ENCODE measurements at regions of chr16 and their contacts with region 1.

Region 1: DNA sequence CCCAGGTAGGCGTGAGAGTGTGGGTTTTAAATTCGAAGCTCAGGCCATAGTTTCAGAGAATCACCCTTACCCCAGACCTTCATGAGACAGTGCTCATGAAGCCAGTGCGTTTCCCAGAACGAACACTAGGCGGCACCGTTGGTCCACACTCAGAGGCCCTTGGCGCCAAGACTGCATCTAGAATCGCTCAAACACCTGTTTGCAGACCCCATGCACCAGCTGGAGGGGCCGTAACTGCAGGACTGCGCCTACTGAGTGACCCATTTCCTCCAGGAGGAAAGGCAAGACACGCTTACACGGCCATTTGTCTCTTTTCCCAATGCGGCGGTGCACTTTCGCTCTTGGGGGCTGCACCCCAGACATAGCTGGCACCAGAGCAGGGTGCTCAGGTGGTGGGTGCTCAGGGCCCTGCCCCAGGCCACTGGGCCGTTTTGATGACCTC is 34.0 kb downstream of the ADGRG5 start:
- DNase-seq: peak; percentile 38
- H3K4me3 ChIP-seq: no peak overlapping the region
- H3K27ac ChIP-seq: no peak overlapping the region
- H3K4me1 ChIP-seq: no peaks in the 10 kb centered on the region
- H3K27me3 ChIP-seq: no peaks in the 10 kb centered on the region
- CTCF ChIP-seq: peak; percentile 99 to 100

Region 2: GRCh38 chr16:57507136-57508034 is 69.1 kb before region 1 on chr16:
- CTCF ChIA-PET with region 1: no interaction called
- dilution Hi-C with region 1: loop called (anchors 5 kb)
- in situ Hi-C with region 1: no loop called
- intact Hi-C with region 1: no loop called
- DNase-seq: no peak
- H3K4me3 ChIP-seq: no peak overlapping the region
- H3K27ac ChIP-seq: no peak overlapping the region
- H3K4me1 ChIP-seq: no peaks in the 10 kb centered on the region
- H3K27me3 ChIP-seq: no peaks in the 10 kb centered on the region
- CTCF ChIP-seq: no peak

Region 3: DNA sequence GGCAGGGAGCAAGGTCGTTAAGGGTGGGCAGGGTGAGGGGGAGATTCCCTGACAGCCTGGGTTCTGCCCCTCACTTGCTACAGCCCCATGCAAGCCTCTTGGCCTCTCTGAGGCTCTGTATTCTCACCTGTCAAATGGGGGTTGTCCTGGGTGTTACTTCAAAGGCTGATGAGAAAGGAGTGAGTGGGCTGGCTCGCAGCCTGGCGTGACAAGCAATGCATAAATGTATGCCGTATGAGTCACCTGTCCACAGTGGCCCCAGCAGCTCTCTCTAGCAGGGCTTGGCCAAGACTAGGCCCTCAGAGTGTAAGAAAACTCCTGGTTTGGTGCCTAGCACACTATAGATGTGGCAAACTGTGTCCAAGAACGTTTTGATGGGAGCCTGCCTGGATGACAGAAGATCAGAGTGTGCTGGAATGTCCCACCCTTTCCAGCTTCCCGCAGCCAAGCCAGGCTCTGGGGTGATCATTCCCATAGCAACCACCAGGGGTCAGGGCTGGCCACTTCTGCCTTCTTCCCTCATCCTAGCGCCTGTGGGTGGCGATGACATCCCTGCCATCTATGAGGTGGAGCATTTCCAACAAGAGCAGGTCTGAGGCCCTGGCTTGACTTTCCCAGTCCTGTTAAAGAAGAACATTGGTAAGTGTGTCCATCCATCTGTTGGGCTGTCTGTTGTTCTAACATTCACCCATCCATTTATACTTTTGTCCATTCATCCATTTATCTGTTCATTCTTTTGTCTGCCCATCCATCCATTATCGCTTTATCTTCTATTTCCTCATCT is 14.8 kb after region 1 on chr16:
- CTCF ChIA-PET with region 1: no interaction called
- dilution Hi-C with region 1: no loop called
- in situ Hi-C with region 1: no loop called
- intact Hi-C with region 1: no loop called
- DNase-seq: peak; percentile 90
- H3K4me3 ChIP-seq: peak overlapping the region in 1 of 3 experiments; percentile 0
- H3K27ac ChIP-seq: peak overlapping the region; percentile 40
- H3K4me1 ChIP-seq: peaks cover 19% of the 10 kb centered on the region
- H3K27me3 ChIP-seq: no peaks in the 10 kb centered on the region
- CTCF ChIP-seq: peak; percentile 89 to 97

Region 4: DNA sequence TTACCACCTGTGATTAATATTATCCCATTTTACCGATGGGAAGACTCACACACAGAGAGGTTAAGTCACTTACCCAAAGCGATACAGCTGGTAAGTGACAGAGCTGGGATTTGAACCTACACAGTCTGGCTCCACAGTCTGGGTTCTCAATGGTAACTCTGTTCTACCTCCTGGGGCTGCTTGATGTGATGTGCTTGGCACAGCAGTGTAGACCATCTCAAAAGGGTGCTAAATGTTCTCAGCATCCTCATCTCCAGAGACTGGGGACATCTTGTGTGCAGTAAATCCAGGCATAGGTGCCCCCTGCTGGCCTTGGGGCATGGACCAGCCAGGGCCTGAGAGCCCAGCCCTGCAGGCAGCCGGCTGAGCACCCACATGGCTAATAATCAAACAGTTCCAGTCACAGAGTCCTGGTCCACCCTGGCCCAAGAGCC is 143.7 kb after region 1 on chr16:
- CTCF ChIA-PET with region 1: interaction called, 5 read pairs
- dilution Hi-C with region 1: no loop called
- in situ Hi-C with region 1: loop called in 1 of 2 experiments (anchors 25 kb)
- intact Hi-C with region 1: loop called (anchors 1 kb)
- DNase-seq: peak; percentile 39
- H3K4me3 ChIP-seq: no peak overlapping the region
- H3K27ac ChIP-seq: no peak overlapping the region
- H3K4me1 ChIP-seq: no peaks in the 10 kb centered on the region
- H3K27me3 ChIP-seq: peaks cover 3% of the 10 kb centered on the region
- CTCF ChIP-seq: peak; percentile 60 to 68

Region 5: DNA sequence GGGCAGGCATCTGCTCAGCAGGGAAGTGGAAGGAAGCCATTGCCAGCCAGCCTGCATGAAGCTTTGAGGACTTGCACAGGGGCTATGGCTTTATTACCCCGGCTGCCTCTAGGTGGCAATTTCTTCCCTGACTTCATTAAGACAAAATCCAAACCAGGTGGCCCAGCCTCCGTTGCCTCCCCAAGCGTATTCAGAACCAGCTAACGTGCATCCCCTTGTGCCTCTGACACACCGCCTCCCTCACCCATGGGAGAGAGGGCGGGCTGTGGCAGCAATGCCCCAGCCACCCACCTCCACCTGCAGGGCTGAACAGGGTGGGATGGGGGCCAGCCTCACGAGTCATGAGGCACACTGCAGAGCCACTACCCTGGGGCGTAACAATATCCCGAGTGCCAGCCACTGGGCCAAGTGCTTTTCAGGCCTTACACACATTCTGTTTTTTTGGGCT is 219.0 kb after region 1 on chr16:
- CTCF ChIA-PET with region 1: no interaction called
- dilution Hi-C with region 1: no loop called
- in situ Hi-C with region 1: no loop called
- intact Hi-C with region 1: loop called (anchors 10 kb)
- DNase-seq: peak; percentile 71
- H3K4me3 ChIP-seq: no peak overlapping the region
- H3K27ac ChIP-seq: no peak overlapping the region
- H3K4me1 ChIP-seq: peaks cover 36% of the 10 kb centered on the region
- H3K27me3 ChIP-seq: no peaks in the 10 kb centered on the region
- CTCF ChIP-seq: peak; percentile 37 to 70

Region 6: DNA sequence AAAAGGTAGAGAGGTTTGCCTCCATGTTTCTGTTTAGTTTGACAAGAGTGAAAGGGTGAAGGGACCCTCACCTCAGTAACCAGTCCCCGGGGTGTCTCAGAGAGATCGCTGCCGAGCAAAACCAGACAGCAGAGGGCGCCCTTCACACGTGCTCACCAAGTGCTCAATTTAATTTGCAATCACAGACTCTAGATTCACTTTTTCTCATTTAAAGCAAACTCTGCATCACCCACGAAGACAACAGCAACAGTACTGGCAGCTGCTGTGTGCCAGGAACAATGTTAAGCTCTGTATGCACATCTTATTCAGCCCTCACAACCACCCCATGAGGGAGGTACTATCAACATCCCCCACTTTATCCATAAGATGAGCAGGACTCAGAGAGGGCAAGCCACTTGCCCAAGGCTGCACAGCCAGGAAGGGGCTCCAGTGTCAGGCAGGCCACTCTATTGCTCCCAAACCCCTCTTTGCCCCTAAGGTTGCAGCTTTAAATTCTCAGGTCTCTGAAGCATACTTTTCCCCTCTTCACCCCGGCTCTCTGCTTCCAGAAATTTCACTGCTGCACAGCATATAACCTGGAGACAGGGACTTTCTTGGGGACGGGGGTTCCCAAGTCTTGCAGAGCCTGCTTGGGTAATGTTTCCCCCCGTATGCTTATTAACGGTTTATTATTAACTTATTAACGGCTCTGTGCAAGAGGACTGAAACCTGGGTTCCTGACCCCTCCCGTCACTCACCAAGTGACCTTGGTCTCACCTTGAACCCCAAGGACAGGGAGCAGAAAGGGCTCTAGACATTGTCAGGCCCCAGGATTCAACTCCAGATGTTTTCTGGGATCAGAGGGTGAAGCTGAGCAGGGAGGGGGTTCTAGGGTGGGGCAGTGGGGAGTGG is 323.6 kb after region 1 on chr16:
- CTCF ChIA-PET with region 1: no interaction called
- dilution Hi-C with region 1: no loop called
- in situ Hi-C with region 1: loop called in 1 of 2 experiments (anchors 25 kb)
- intact Hi-C with region 1: loop called (anchors 2 kb)
- DNase-seq: peak; percentile 42
- H3K4me3 ChIP-seq: no peak overlapping the region
- H3K27ac ChIP-seq: no peak overlapping the region
- H3K4me1 ChIP-seq: peaks cover 3% of the 10 kb centered on the region
- H3K27me3 ChIP-seq: no peaks in the 10 kb centered on the region
- CTCF ChIP-seq: peak; percentile 90 to 95

Region 7: GRCh38 chr16:58487566-58488351 is 911.3 kb after region 1 on chr16:
- CTCF ChIA-PET with region 1: no interaction called
- dilution Hi-C with region 1: no loop called
- in situ Hi-C with region 1: no loop called
- intact Hi-C with region 1: loop called (anchors 5 kb)
- DNase-seq: peak; percentile 51
- H3K4me3 ChIP-seq: peak overlapping the region in 2 of 3 experiments; percentile 33 to 40
- H3K27ac ChIP-seq: no peak overlapping the region
- H3K4me1 ChIP-seq: peaks cover 5% of the 10 kb centered on the region
- H3K27me3 ChIP-seq: no peaks in the 10 kb centered on the region
- CTCF ChIP-seq: peak; percentile 69 to 94

Measured in mammary epithelial cell (primary cell).